ENCODE measurements at regions of chr16 and their contacts with region 1.

Region 1: DNA sequence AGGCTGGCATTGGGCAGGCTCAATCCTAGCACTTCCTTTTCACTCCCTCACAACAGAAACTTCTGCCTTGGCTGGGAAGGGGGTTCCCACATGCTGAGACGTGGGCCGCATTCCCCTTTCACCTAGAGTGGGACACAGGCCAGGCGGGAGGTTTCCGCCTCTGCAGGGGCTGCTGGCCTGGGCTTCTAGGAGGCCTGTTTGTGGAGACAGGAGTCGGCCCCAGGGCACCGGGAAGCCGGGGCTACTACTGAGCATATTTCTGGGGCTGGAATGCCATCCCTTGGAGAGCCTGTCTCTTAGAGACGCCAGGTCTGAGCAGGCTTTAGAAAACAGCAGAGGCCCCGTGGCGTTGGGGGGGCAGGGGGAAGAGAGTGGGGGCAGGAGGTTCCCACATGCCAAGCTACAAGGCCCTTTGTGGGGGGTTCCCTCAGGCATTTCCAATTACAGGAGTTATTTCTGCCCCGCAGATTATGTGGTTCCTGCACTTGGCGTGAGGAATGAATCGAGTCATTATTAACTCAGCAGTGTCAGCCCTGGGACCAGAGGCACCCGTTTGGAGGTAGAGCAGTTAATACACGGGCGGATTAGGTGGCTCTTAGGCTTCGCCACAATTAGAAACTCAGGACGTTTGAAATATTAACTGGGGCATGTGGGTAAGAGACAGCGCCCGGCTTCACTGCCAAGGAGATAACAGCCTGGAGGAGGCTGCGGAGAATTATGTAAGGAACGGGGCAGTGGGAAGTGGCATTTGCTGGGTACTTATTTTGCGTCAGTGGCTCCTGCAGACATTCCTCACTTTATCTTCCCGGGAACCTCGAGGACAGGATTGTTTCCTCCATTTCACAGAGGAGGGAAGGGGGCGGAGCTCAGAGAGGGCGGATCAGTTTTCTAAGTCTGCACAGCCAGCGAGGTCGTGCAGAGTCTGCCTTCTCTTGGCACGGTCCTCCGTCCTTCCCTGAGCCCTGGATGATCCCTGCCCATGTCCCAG is 162.5 kb downstream of the MAF start:
- DNase-seq: peak in 1 of 2 donors; percentile 48
- ATAC-seq: peak; percentile 49 to 86 (median 69)
- H3K4me3 ChIP-seq: peak overlapping the region in 7 of 10 donors; percentile 14 to 35 (median 21)
- H3K27ac ChIP-seq: peak overlapping the region in 8 of 10 donors; percentile 20 to 71 (median 48)
- H3K4me1 ChIP-seq: peaks cover 0 to 40% (median 17%) of the 10 kb centered on the region in 9 donors
- H3K27me3 ChIP-seq: no peaks in the 10 kb centered on the region
- CTCF ChIP-seq: no peak

Region 2: GRCh38 chr16:79589601-79590102 is 151.6 kb after region 1 on chr16:
- intact Hi-C with region 1: loop called in 2 of 10 experiments (anchors 10 kb)
- DNase-seq: peak in 1 of 2 donors; percentile 17
- ATAC-seq: peak in 7 of 8 donors; percentile 35 to 62 (median 42)
- H3K4me3 ChIP-seq: peak overlapping the region; percentile 29 to 69 (median 56)
- H3K27ac ChIP-seq: peak overlapping the region in 8 of 10 donors; percentile 29 to 74 (median 58)
- H3K4me1 ChIP-seq: peaks cover 0 to 37% (median 8%) of the 10 kb centered on the region in 9 donors
- H3K27me3 ChIP-seq: peaks cover 0 to 27% (median 14%) of the 10 kb centered on the region in 7 donors
- CTCF ChIP-seq: peak in 1 of 9 donors; percentile 17

Region 3: DNA sequence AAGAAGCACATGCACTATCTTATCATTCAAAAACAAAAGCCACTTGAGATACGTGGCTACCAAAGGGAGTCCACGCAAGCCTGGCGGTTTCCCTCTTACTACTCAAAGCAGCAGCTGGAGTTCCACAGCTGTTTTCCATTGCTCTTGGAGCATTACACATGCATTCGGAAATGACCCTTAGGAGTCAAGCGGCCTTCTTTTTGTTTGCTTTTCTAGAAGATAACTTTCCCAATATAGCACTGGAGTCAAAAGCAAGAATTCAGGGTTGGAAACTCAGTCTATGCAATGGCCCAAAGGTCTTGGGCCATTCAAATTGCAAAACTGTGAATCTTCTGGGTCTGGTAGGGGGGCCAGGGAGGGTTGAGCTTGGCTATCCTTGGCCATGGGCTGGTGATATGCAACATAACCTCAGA is 260.3 kb after region 1 on chr16:
- intact Hi-C with region 1: no loop called
- DNase-seq: peak; percentile 35 to 69
- ATAC-seq: peak; percentile 87 to 96 (median 92)
- H3K4me3 ChIP-seq: no peak overlapping the region
- H3K27ac ChIP-seq: peak overlapping the region in 1 of 10 donors; percentile 23
- H3K4me1 ChIP-seq: peaks cover 0 to 12% (median 0%) of the 10 kb centered on the region in 9 donors
- H3K27me3 ChIP-seq: no peaks in the 10 kb centered on the region
- CTCF ChIP-seq: no peak

Measured in heart right ventricle (tissue), 16 donors.